GM13977 (cell line): ENCODE measurements at regions of chr11 and their contacts with region 1.

Region 1: DNA sequence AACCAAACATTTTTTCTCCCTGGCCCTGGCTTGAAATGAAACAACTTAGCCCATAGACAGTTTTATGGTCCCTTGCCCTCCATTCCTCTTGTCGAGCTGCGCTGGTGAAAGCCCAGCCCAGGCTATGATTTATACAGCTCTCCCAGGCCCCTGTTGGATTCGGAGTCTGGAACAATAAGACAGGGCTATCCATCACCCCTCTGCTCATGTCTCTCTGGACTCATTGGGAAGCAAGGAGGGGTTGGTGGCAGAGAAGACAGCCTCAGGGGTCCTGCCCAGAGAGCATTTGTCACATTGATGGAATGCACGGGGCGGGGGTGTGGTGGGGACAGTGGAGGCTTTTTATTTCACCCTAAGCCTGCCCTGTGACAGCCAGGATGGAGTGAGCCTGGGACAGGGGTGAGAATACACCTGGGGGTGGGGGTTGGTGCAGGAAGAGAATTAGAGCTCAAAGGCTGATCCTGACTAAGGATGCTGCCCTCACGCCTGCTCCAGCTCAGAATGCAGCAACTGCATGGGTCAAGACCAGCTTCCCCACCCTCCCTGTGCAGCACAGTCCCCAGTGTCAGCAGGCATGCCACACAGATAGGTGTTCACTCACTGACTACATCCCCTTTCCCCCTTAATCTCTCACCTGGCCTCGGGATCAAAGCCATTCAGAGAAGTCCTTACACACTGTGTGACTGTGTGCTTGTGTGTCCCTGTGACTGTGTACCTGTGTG is 10.0 kb upstream of the PKNOX2 start:
- DNase-seq: no peak
- CTCF ChIP-seq: no peak

Region 2: GRCh38 chr11:124961972-124962609 is 192.4 kb before region 1 on chr11:
- in situ Hi-C with region 1: loop called (anchors 10 kb)
- DNase-seq: peak; percentile 67
- CTCF ChIP-seq: peak; percentile 70